WTC11 (cell line): ENCODE measurements at regions of chr20 and their contacts with region 1.

Region 1: GRCh38 chr20:38730989-38731737 is 6.9 kb downstream of the SLC32A1 start:
- DNase-seq: peak; percentile 93
- ATAC-seq: peak; percentile 36
- H3K4me3 Mint-ChIP-seq: peak overlapping the region; percentile 74
- H3K27ac Mint-ChIP-seq: 0 out of 2 replicates have a peak overlapping the region, but pooled peaks have one; percentile 19
- H3K4me1 Mint-ChIP-seq: peaks cover 51% of the 10 kb centered on the region
- H3K27me3 Mint-ChIP-seq: peaks cover 99% of the 10 kb centered on the region
- CTCF ChIP-seq: peak; percentile 99

Region 2: GRCh38 chr20:38633577-38634093 is 97.5 kb before region 1 on chr20:
- CTCF ChIA-PET with region 1: interaction called, 29 read pairs
- POLR2A ChIA-PET with region 1: no interaction called
- DNase-seq: peak; percentile 79
- ATAC-seq: peak; percentile 91
- H3K4me3 Mint-ChIP-seq: no peak overlapping the region
- H3K27ac Mint-ChIP-seq: no peak overlapping the region
- H3K4me1 Mint-ChIP-seq: peaks cover 22% of the 10 kb centered on the region
- H3K27me3 Mint-ChIP-seq: peaks cover 11% of the 10 kb centered on the region
- CTCF ChIP-seq: peak; percentile 81

Region 3: DNA sequence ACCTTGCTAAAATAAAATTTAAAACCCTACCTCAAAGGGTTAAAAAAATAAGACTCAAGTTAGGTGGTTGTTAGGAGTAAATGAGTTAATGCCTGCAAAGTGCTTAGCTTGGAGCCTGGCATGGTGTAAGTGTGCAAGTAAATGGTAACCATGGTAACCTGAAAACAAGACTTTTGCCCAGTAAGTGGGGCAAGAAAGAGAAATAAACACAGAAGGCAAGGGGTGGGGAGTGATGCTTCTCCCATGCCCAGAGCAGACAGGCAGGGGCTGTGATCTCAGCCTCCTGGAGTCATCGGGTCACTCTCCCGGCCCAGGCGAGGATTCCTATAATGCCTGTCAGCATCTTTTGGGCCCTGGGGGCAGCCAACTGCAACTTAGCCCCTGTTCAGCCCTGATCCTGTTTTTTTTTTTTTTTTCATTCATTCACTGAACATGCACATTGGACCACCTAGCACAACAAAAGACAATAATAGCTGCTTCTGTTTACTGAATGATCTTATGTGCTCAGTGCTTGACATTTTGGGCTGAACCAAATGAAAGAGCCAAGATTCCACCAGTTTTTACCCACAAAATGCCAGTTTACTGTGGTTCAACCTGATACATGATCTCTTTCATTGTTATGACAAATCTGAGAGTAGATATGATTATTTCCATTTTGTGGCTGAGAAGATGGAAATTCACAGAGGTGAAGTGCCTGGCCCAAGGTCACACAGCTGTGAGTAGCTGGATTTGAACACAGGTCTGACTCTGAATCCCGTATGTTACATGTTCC is 65.9 kb before region 1 on chr20:
- CTCF ChIA-PET with region 1: interaction called, 161 read pairs
- POLR2A ChIA-PET with region 1: no interaction called
- DNase-seq: no peak
- ATAC-seq: no peak
- H3K4me3 Mint-ChIP-seq: no peak overlapping the region
- H3K27ac Mint-ChIP-seq: no peak overlapping the region
- H3K4me1 Mint-ChIP-seq: peaks cover 10% of the 10 kb centered on the region
- H3K27me3 Mint-ChIP-seq: peaks cover 42% of the 10 kb centered on the region
- CTCF ChIP-seq: no peak

Region 4: DNA sequence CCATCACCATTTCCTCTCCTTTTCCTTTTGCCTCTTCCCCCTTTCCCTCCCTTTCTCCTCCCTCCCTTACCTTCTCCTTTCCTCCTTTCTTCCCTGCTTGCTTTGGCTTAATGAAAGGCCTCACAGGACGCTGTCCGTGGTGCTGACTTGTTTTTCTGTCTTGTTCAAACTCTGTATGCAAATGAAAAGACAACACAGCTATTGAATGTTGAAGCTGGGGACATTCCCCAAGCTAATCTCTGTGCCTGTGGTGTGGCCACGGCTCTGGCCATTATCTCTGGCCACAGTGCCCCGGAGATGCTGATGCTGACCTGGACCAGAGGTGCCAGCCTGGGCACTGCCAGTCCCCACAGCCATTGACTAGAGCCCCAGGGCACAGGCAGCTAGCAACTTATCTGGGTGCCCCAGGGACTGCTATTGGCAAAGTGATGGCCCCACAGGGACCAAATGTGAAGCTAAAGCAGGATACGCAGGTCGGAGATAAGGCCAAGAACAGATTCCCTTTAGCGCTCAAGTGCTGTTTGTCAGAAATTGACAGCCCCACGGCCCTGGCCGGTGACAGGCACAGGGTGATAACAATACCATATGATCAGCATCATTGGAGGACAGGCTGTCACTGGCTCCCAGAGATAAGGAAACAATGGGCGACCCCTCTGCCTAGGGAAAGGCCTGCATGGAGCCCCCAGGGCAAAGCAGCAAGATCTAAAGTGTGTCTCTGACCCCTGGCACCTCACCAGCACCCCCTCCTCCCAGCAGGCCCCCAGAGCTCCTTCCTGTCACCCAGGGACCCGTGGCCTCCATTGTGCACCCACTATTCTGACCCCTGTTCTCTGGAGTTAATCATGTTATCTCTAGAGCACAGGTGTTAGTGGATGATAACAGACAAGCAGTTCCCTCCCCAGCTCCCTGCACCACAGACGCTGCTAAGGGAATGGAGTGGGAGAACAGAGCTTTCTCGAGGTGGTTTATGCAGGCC is 38.4 kb before region 1 on chr20:
- CTCF ChIA-PET with region 1: interaction called, 19 read pairs
- POLR2A ChIA-PET with region 1: interaction called, 3 read pairs
- DNase-seq: peak; percentile 93
- ATAC-seq: peak; percentile 87
- H3K4me3 Mint-ChIP-seq: no peak overlapping the region
- H3K27ac Mint-ChIP-seq: no peak overlapping the region
- H3K4me1 Mint-ChIP-seq: peaks cover 3% of the 10 kb centered on the region
- H3K27me3 Mint-ChIP-seq: peaks cover 43% of the 10 kb centered on the region
- CTCF ChIP-seq: no peak

Region 5: DNA sequence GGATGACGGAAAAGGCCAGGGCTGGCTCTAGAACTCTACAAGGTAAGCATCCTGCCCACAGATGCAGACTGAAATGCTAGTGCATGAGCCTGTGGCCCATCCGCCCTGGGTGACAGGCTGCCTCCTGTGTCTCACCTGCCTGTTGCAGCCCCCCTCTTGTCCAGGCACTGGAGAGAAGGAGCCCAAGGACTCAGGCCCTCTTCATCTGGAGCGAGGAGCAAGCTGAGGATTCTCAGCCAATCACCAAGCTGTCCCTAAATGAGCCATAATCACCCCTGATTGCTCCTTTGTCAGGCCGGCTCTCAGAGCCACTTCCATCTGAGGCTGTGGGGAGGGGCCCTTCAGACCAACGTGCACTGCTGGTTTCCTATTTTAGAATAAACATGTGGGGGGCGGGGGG is 16.9 kb before region 1 on chr20:
- CTCF ChIA-PET with region 1: interaction called, 65 read pairs
- POLR2A ChIA-PET with region 1: no interaction called
- DNase-seq: no peak
- ATAC-seq: peak; percentile 61
- H3K4me3 Mint-ChIP-seq: no peak overlapping the region
- H3K27ac Mint-ChIP-seq: no peak overlapping the region
- H3K4me1 Mint-ChIP-seq: peaks cover 19% of the 10 kb centered on the region
- H3K27me3 Mint-ChIP-seq: peaks cover 37% of the 10 kb centered on the region
- CTCF ChIP-seq: no peak

Region 6: DNA sequence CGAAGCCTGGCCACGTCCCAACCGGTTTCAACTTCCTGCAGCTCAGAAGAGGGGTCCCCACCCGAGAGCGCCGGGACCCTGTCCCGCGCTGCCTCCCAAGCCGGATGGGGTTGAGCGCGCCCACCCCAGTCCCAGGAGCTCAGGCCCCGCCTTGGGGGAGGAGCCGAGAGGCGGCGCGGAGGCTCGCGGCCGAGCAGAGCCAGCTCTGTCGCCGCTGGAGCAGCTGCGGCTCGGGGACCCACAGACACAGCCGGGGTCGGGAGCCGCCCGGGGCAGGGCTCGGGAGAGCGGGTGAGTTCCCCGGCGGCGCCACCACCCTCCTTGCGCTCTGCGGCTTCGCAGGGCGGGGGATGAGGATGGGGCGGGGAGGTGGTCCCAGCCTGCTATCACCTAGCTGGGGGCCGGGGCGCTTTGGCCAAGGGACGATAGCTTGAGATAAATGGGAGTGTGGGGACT is 74.4 kb after region 1 on chr20 and contains the start of gene PPP1R16B:
- CTCF ChIA-PET with region 1: interaction called, 10 read pairs
- POLR2A ChIA-PET with region 1: interaction called, 3 read pairs
- DNase-seq: peak; percentile 81
- ATAC-seq: peak; percentile 79
- H3K4me3 Mint-ChIP-seq: peak within 1 kb of the TSS; percentile 82
- H3K27ac Mint-ChIP-seq: peak within 1 kb of the TSS; percentile 97
- H3K4me1 Mint-ChIP-seq: peaks cover 37% of the 10 kb centered on the region
- H3K27me3 Mint-ChIP-seq: peaks cover 31% of the 10 kb centered on the region
- CTCF ChIP-seq: no peak
- total RNA-seq, gene PPP1R16B: 8.1 to 12.0 TPM (median 8.2 TPM) in 3 replicates

Region 7: GRCh38 chr20:38828514-38829295 is 97.5 kb after region 1 on chr20:
- CTCF ChIA-PET with region 1: no interaction called
- POLR2A ChIA-PET with region 1: no interaction called
- DNase-seq: no peak
- ATAC-seq: no peak
- H3K4me3 Mint-ChIP-seq: no peak overlapping the region
- H3K27ac Mint-ChIP-seq: no peak overlapping the region
- H3K4me1 Mint-ChIP-seq: peaks cover 43% of the 10 kb centered on the region
- H3K27me3 Mint-ChIP-seq: no peaks in the 10 kb centered on the region
- CTCF ChIP-seq: no peak